Activated T-helper 1 cell treated with anti-CD3 and anti-CD28 coated beads, Interleukin-12 subunit alpha, Interleukin-12 subunit beta, Interleukin-2, Interleukin-4 antibody, amounts not matched to agents 30 ng/mL and 10 ng/mL and 1 ng/mL, durations not matched to agents 14 hours and 24 hours and 36 hours (primary cell): ENCODE measurements at regions of chr9 and their contacts with region 1.

Region 1: GRCh38 chr9:76704593-76705204 is 59.5 kb upstream of the PCA3 start:
- DNase-seq: no peak
- H3K4me3 Mint-ChIP-seq: no peak overlapping the region
- H3K27ac Mint-ChIP-seq: no peak overlapping the region
- H3K4me1 Mint-ChIP-seq: peaks cover 6% of the 10 kb centered on the region
- H3K27me3 Mint-ChIP-seq: peaks cover 13% of the 10 kb centered on the region

Region 2: GRCh38 chr9:75866273-75866871 is 838.3 kb before region 1 on chr9:
- intact Hi-C with region 1: loop called (anchors 10 kb)
- DNase-seq: no peak
- H3K4me3 Mint-ChIP-seq: no peak overlapping the region
- H3K27ac Mint-ChIP-seq: no peak overlapping the region
- H3K4me1 Mint-ChIP-seq: no peaks in the 10 kb centered on the region
- H3K27me3 Mint-ChIP-seq: peaks cover 3% of the 10 kb centered on the region

Region 3: GRCh38 chr9:76451234-76451633 is 253.5 kb before region 1 on chr9:
- intact Hi-C with region 1: loop called (anchors 1 kb)
- DNase-seq: no peak
- H3K4me3 Mint-ChIP-seq: no peak overlapping the region
- H3K27ac Mint-ChIP-seq: no peak overlapping the region
- H3K4me1 Mint-ChIP-seq: peaks cover 24% of the 10 kb centered on the region
- H3K27me3 Mint-ChIP-seq: no peaks in the 10 kb centered on the region

Region 4: DNA sequence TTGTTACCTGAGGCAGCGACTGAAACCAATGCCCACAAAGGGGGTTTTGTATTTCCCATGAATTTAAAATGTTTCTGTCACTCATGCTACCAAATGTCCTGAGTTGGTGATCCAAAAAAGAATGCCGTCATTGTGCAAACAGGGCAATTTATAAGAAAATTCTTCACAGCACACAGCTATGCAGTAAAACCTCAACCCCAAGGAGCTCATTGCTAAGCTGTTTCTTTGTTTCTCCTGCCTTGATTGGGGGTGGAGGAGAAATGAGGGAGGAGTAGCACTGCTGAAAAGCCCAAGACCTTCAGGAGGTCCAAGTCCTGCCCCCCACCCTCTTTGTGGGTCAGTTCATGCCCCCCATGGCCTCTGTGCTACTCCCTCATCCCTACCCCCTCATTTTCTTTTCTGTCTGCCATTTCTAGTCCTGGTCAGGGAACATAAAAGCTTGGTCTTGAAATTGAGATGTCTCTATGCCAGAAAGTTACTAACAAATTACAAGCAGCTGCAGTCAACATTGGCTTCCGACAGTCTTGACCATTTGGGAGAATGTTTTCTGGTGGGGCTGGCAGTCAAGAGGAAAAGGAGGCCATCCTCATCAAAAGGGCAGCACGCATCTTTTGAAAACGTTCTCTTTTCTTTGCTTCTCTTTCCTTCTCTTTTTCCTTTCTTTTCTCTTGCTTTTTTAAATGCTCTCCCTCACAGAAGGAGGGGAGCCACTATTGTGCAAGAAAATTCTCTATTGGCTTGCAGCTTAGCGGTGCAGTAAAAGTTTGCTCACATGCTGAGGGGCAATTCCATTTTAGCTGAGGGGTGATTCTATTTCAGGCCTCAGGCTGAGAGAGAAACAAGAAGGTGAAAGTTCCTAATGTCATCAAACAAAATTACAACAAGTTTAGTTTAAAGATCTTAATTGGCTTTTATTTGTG is 112.3 kb before region 1 on chr9:
- intact Hi-C with region 1: no loop called
- DNase-seq: no peak
- H3K4me3 Mint-ChIP-seq: no peak overlapping the region
- H3K27ac Mint-ChIP-seq: peak overlapping the region; percentile 20
- H3K4me1 Mint-ChIP-seq: peaks cover 13% of the 10 kb centered on the region
- H3K27me3 Mint-ChIP-seq: peaks cover 8% of the 10 kb centered on the region

Region 5: GRCh38 chr9:76667521-76667957 is 37.2 kb before region 1 on chr9:
- intact Hi-C with region 1: loop called (anchors 2 kb)
- DNase-seq: no peak
- H3K4me3 Mint-ChIP-seq: no peak overlapping the region
- H3K27ac Mint-ChIP-seq: no peak overlapping the region
- H3K4me1 Mint-ChIP-seq: no peaks in the 10 kb centered on the region
- H3K27me3 Mint-ChIP-seq: peaks cover 5% of the 10 kb centered on the region

Region 6: DNA sequence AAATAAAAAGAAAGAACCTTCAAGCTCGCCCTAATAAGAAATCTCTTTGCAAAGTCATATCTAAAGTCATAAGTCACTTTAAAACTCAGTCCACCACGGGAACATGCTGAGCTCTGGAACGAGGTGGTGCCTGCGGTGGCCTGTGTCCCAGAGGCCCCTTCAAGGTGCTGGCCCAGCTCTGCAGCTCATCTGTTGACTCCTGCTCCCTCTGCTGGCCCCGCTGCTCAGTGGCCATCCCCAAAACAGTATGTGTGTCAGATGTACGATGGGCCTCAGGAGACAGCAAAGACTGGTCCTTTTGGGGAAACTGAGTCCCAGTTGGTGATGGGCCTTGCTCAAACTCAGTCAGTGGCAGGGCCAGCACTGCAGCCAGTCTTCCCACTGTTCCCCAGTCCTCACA is 292.0 kb after region 1 on chr9:
- intact Hi-C with region 1: no loop called
- DNase-seq: no peak
- H3K4me3 Mint-ChIP-seq: no peak overlapping the region
- H3K27ac Mint-ChIP-seq: no peak overlapping the region
- H3K4me1 Mint-ChIP-seq: no peaks in the 10 kb centered on the region
- H3K27me3 Mint-ChIP-seq: peaks cover 2% of the 10 kb centered on the region